MCF 10A (cell line): ENCODE measurements at regions of chr9 and their contacts with region 1.

Region 1: DNA sequence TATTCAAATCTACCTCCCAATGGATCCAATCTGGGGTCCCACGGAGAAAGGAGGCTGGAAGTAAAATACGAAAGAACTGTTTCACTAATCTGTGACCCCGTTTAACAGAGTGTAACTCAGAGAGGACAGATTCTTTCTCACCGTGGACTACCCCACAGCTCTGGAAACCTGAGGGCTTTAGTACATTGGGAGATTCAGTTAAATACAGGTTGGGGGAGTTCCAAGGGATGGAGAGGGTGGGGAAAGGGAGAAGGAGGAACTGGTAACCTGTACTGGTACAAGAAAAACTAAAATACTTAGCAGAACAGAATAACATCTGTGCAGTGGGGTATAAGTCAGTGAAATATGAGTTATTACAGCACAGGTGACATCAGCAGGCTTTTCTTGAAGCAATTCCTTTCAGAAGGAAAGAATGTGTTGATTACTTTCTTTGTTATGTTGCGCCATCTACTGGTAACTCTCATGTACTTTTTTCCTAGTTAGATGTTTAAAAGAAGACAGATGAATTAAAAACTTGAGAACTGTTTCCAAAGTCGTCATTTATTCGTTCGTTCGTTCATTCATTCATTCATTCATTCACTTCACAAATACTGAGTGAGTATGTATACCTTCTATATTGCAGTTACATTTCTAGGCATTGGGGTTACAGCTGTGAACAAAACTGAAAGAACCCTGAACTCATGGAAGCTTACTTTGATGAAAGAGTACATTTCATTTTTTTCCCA is 30.0 kb upstream of the STOM start:
- DNase-seq: peak; percentile 80
- H3K4me3 Mint-ChIP-seq: no peak overlapping the region
- H3K27ac Mint-ChIP-seq: no peak overlapping the region
- H3K4me1 Mint-ChIP-seq: peaks cover 20% of the 10 kb centered on the region
- H3K27me3 Mint-ChIP-seq: no peaks in the 10 kb centered on the region
- CTCF ChIP-seq: peak; percentile 63

Region 2: GRCh38 chr9:121246821-121247561 is 153.1 kb before region 1 on chr9:
- CTCF ChIA-PET with region 1: no interaction called
- POLR2A ChIA-PET with region 1: no interaction called
- intact Hi-C with region 1: no loop called
- DNase-seq: peak; percentile 55
- H3K4me3 Mint-ChIP-seq: no peak overlapping the region
- H3K27ac Mint-ChIP-seq: no peak overlapping the region
- H3K4me1 Mint-ChIP-seq: peaks cover 6% of the 10 kb centered on the region
- H3K27me3 Mint-ChIP-seq: no peaks in the 10 kb centered on the region
- CTCF ChIP-seq: no peak

Region 3: GRCh38 chr9:121286973-121287741 is 112.9 kb before region 1 on chr9:
- CTCF ChIA-PET with region 1: interaction called, 12 read pairs
- POLR2A ChIA-PET with region 1: interaction called, 24 read pairs
- intact Hi-C with region 1: no loop called
- DNase-seq: peak; percentile 99
- H3K4me3 Mint-ChIP-seq: peak overlapping the region; percentile 32
- H3K27ac Mint-ChIP-seq: peak overlapping the region; percentile 80
- H3K4me1 Mint-ChIP-seq: peaks cover 70% of the 10 kb centered on the region
- H3K27me3 Mint-ChIP-seq: no peaks in the 10 kb centered on the region
- CTCF ChIP-seq: peak; percentile 14

Region 4: DNA sequence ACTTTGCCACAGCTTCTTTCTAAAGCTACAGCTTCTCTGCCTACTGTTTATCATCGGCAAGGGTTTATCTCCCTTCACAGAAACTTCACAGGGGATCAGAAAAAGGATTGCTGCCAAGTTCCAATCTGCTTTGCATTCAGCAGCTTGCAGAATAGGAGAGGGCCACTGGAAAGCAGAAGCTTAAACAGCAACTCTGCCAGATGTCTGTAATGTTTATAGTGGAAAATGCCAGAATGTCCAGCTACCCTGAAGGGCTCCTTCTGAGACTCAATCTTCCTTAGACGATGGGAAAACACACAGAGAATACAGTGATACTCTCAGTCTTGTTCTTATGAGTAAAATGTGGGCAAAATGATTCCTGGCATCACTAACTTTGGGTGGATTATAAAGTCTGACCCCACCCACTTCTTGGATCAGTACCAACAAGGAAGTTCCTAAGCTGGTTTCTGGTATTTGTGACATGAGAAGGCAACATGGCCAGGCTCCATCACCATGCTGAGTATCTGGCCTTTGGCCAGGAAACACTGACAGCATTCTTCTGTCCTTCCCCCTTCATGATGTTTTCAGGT is 49.0 kb before region 1 on chr9:
- CTCF ChIA-PET with region 1: interaction called, 4 read pairs
- POLR2A ChIA-PET with region 1: interaction called, 10 read pairs
- intact Hi-C with region 1: loop called (anchors 1 kb)
- DNase-seq: peak; percentile 90
- H3K4me3 Mint-ChIP-seq: no peak overlapping the region
- H3K27ac Mint-ChIP-seq: no peak overlapping the region
- H3K4me1 Mint-ChIP-seq: peaks cover 52% of the 10 kb centered on the region
- H3K27me3 Mint-ChIP-seq: no peaks in the 10 kb centered on the region
- CTCF ChIP-seq: no peak

Region 5: DNA sequence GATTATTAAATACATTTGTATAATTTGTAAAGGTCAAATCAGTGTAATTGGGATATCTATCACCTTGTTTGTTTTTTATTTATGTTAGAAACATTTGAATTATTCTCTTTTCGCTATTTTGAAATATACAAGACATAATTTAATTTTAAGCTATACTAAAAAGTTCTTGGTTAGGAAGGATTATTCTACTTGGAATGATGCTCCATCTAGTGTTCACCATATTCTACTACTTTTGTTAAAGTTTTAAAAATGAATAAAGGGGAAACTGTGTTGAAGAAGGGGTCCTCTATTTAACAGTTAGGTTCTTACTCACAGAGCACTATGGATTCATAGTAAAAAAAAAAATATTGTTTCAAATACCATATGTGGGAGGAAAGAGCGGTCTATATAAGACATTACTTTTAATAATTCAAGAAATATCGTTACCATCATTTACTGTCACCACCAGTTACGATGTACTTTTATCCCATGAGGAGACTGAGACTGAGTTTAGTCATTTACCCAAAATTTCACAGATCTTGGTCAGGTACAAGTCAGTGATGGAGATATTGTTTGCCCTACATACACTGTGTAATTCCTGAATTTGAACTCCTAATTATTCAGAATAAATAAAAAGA is 23.7 kb before region 1 on chr9:
- CTCF ChIA-PET with region 1: interaction called, 72 read pairs
- POLR2A ChIA-PET with region 1: interaction called, 77 read pairs
- intact Hi-C with region 1: loop called (anchors 1 kb)
- DNase-seq: no peak
- H3K4me3 Mint-ChIP-seq: no peak overlapping the region
- H3K27ac Mint-ChIP-seq: no peak overlapping the region
- H3K4me1 Mint-ChIP-seq: peaks cover 28% of the 10 kb centered on the region
- H3K27me3 Mint-ChIP-seq: no peaks in the 10 kb centered on the region
- CTCF ChIP-seq: peak; percentile 45

Region 6: DNA sequence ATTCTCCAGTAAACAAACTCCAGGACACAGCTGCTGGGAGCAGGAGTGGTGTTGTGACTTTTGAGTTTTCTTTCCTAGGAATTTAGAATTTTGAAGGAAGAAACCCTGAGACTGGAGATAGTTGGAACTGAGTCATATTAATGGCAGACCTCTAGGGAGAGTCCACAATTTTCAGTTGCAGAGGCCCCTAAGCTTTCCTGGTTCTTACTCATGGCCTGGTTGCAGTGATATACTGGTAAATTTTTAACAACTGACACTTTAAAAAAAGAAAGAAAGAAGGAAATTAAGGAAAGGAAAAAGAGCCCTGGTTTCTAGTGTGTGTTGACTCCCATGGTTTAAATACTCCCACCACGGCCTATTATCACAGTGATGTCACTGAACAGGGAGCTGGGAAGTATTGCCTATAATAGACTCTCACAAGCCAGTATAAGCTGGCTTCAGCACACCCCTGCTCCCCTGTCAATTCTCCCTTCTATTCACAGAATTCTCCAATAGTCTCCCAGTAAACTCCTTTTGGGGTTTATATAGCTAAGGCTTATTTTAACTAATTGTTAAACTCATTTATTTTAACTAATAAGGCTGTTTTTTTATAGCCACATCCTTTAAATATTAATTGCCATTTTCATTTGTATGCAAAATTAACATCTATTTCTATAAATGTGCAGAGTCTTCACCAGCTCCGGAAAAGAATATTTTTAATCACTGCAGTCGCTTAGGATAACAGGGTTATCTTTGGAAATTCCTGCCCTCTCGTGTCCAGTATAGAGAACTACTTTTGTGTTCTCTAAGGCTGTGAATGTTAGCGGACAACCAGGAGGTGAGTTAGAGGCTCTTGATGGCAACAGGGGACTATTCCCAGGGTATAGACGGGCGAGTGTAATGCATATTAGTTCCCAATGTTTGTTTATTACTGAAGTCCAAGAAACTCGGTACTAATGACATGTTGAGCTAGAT is 39.9 kb after region 1 on chr9:
- CTCF ChIA-PET with region 1: interaction called, 14 read pairs
- POLR2A ChIA-PET with region 1: no interaction called
- intact Hi-C with region 1: no loop called
- DNase-seq: peak; percentile 17
- H3K4me3 Mint-ChIP-seq: no peak overlapping the region
- H3K27ac Mint-ChIP-seq: no peak overlapping the region
- H3K4me1 Mint-ChIP-seq: no peaks in the 10 kb centered on the region
- H3K27me3 Mint-ChIP-seq: peaks cover 26% of the 10 kb centered on the region
- CTCF ChIP-seq: peak; percentile 15